PC-9 (cell line): ENCODE measurements at regions of chr5 and their contacts with region 1.

Region 1: GRCh38 chr5:74810915-74811314 is 43.9 kb downstream of the NSA2 start:
- DNase-seq: peak in 1 of 2 experiments; percentile 58
- H3K4me3 ChIP-seq: no peak overlapping the region
- H3K27ac ChIP-seq: no peak overlapping the region
- H3K4me1 ChIP-seq: no peaks in the 10 kb centered on the region; the same call in 1 of the 2 replicates
- H3K27me3 ChIP-seq: no peaks in the 10 kb centered on the region
- CTCF ChIP-seq: no peak

Region 2: GRCh38 chr5:73729329-73729728 is 1081.6 kb before region 1 on chr5:
- CTCF ChIA-PET with region 1: no interaction called
- POLR2A ChIA-PET with region 1: no interaction called
- intact Hi-C with region 1: no loop called
- DNase-seq: no peak
- H3K4me3 ChIP-seq: no peak overlapping the region
- H3K27ac ChIP-seq: no peak overlapping the region
- H3K4me1 ChIP-seq: no peaks in the 10 kb centered on the region
- H3K27me3 ChIP-seq: no peaks in the 10 kb centered on the region
- CTCF ChIP-seq: no peak

Region 3: DNA sequence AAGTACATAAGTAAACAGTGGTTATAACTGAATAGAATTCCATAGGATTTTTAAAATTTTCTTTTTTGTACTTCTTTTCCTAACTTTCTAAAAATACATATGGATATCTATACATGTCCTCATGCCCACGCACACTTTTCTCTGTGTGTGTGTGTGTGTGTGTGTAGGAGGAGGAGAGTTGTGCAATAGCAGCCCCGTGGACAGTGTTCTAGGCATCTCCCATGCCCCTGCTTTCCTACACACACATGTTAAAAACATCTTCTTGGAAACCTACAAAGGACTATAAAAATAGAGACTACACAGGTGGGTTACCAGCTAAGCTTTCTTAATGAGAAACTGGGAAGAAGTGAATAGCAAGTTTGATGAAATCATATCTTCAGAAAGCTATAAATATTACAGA is 145.6 kb before region 1 on chr5:
- CTCF ChIA-PET with region 1: no interaction called
- POLR2A ChIA-PET with region 1: interaction called, 17 read pairs
- intact Hi-C with region 1: no loop called
- DNase-seq: no peak
- H3K4me3 ChIP-seq: no peak overlapping the region
- H3K27ac ChIP-seq: no peak overlapping the region
- H3K4me1 ChIP-seq: no peaks in the 10 kb centered on the region
- H3K27me3 ChIP-seq: no peaks in the 10 kb centered on the region
- CTCF ChIP-seq: no peak

Region 4: DNA sequence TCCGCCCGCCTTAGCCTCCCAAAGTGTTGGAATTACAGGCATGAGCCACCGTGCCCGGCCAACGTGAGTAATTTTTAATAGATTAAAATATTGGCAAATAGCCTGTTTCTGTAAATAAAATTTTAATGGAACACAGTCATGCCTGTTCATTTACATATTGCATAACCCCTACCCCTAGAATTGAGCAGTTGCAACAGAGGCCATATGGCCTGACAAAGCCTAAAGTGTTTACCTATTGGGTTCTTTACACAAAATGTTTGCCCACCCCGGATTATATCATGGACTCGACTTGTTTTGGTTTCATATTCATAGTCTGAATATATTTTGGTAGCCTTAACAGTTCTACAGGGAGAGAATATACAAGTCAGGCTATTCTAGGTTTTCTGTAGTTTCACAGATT is 38.6 kb before region 1 on chr5:
- CTCF ChIA-PET with region 1: no interaction called
- POLR2A ChIA-PET with region 1: interaction called, 13 read pairs
- intact Hi-C with region 1: no loop called
- DNase-seq: no peak
- H3K4me3 ChIP-seq: no peak overlapping the region
- H3K27ac ChIP-seq: no peak overlapping the region
- H3K4me1 ChIP-seq: peaks cover 6% of the 10 kb centered on the region
- H3K27me3 ChIP-seq: no peaks in the 10 kb centered on the region
- CTCF ChIP-seq: no peak

Region 5: GRCh38 chr5:74798977-74799911 is 11.7 kb before region 1 on chr5:
- CTCF ChIA-PET with region 1: interaction called, 21 read pairs
- POLR2A ChIA-PET with region 1: no interaction called
- intact Hi-C with region 1: no loop called
- DNase-seq: no peak
- H3K4me3 ChIP-seq: no peak overlapping the region
- H3K27ac ChIP-seq: no peak overlapping the region
- H3K4me1 ChIP-seq: no peaks in the 10 kb centered on the region
- H3K27me3 ChIP-seq: no peaks in the 10 kb centered on the region
- CTCF ChIP-seq: no peak

Region 6: DNA sequence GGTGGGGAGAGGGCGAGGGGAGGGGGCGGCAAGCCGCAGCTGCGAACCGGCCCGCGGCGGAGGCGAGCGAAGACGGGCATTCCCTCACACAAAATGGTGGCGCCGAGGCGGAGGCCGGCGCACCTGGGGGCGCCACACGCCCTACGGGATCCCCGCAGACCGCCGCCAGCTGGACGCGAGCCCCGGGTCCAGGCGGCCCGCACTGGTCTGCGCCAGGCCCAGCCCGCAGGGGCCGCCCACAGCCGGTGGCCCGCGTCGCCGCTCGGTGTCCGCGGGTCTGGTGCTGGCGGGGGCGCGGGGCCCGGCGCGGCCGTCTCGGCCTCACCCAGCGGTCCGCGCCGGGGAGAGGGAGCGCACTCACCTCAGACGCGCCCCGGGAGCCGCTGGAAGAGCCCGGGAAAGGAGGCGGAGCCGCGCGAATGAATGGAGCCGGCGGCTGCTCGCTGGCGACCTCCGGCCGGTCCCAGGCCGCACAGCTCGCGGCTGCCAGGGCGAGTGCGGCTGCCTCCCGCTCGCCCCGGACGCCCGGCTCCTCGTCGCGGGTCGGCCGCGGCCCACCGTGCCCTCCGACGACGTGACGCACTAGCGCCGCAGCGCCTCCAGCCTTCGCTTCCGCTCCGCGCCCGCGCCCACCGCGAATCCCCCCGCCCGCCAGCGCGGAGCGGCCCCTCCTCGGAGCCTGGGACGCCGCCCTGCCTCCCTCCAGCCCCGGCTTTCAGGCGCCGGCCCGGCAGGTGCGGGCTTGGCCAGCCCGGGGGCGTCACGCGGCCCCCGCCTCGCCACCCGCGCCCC is 55.1 kb after region 1 on chr5 and contains the start of gene FAM169A:
- CTCF ChIA-PET with region 1: interaction called, 23 read pairs
- POLR2A ChIA-PET with region 1: no interaction called
- intact Hi-C with region 1: no loop called
- DNase-seq: peak; percentile 41 to 68
- H3K4me3 ChIP-seq: peak within 1 kb of the TSS; percentile 95
- H3K27ac ChIP-seq: no peak within 1 kb of the TSS
- H3K4me1 ChIP-seq: peaks cover 9% of the 10 kb centered on the region
- H3K27me3 ChIP-seq: no peaks in the 10 kb centered on the region
- CTCF ChIP-seq: no peak
- total RNA-seq, gene FAM169A: 2.1 and 3.9 TPM in 2 replicates